PC-9 (cell line): ENCODE measurements at regions of chr4 and their contacts with region 1.

Region 1: GRCh38 chr4:46270986-46271596 is 118.8 kb downstream of the GABRA2 start:
- DNase-seq: no peak
- H3K4me3 ChIP-seq: no peak overlapping the region
- H3K27ac ChIP-seq: no peak overlapping the region
- H3K4me1 ChIP-seq: no peaks in the 10 kb centered on the region
- H3K27me3 ChIP-seq: no peaks in the 10 kb centered on the region
- CTCF ChIP-seq: peak; percentile 65

Region 2: DNA sequence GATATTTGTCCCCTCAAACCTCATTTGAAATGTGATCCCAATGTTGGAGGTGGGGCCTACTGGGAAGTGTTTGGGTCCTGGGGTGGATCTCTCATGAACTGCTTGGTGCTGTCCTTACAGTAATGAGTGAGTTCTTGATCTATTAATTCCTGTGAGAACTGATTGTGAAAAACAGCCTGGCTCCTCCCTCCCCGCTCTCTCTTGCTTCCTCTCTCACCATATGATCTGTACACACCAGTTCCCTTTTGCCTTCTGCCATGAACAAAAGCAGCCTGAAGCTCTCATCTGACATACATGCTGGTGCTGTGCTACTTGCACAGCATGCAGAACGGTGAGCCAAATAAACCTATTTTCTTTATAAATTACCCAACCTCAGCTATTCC is 1608.5 kb before region 1 on chr4:
- CTCF ChIA-PET with region 1: no interaction called
- POLR2A ChIA-PET with region 1: no interaction called
- intact Hi-C with region 1: loop called (anchors 10 kb)
- DNase-seq: no peak
- H3K4me3 ChIP-seq: no peak overlapping the region
- H3K27ac ChIP-seq: no peak overlapping the region
- H3K4me1 ChIP-seq: no peaks in the 10 kb centered on the region
- H3K27me3 ChIP-seq: no peaks in the 10 kb centered on the region
- CTCF ChIP-seq: no peak

Region 3: DNA sequence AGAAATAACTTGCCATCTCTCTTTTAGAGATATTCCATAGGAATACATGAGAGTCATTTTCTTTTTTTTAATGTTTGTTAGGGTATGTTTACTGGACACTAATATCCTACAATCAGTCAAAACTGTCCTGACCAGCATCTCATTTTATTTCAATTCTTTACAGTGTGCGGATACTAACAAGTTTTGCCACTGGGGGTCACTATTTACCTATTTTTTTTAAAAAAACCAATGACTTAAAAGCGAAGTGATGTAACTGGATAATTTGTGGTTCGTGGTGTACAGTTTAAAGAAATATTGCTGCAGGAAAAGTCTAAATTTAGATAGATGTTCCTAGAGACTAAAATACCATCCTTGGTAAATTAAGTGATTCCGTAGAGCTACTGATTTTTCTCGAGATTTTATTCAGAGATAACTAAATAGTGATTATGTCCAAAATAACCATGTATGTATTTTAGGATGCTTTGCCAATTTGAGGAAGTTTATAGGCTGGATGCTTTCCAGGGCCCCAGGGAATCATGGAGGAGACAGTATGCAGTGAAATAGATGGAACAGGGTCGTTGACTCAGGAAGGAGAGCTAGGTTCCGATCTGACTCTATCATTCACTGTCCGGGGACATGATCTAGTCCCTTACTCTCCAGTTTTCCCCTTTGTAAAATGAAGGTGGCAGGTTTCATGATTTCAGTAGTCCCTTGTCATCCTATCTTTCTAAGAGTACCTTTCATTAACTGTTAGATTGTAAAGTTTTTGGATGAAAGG is 1510.8 kb before region 1 on chr4:
- CTCF ChIA-PET with region 1: no interaction called
- POLR2A ChIA-PET with region 1: no interaction called
- intact Hi-C with region 1: loop called (anchors 2 kb)
- DNase-seq: no peak
- H3K4me3 ChIP-seq: no peak overlapping the region
- H3K27ac ChIP-seq: no peak overlapping the region
- H3K4me1 ChIP-seq: no peaks in the 10 kb centered on the region
- H3K27me3 ChIP-seq: no peaks in the 10 kb centered on the region
- CTCF ChIP-seq: peak; percentile 70

Region 4: GRCh38 chr4:44927399-44928380 is 1343.4 kb before region 1 on chr4:
- CTCF ChIA-PET with region 1: no interaction called
- POLR2A ChIA-PET with region 1: no interaction called
- intact Hi-C with region 1: loop called (anchors 2 kb)
- DNase-seq: no peak
- H3K4me3 ChIP-seq: no peak overlapping the region
- H3K27ac ChIP-seq: no peak overlapping the region
- H3K4me1 ChIP-seq: no peaks in the 10 kb centered on the region
- H3K27me3 ChIP-seq: no peaks in the 10 kb centered on the region
- CTCF ChIP-seq: peak; percentile 68

Region 5: GRCh38 chr4:45453258-45453853 is 817.7 kb before region 1 on chr4:
- CTCF ChIA-PET with region 1: no interaction called
- POLR2A ChIA-PET with region 1: no interaction called
- intact Hi-C with region 1: loop called (anchors 5 kb)
- DNase-seq: peak in 1 of 2 experiments; percentile 33
- H3K4me3 ChIP-seq: no peak overlapping the region
- H3K27ac ChIP-seq: no peak overlapping the region
- H3K4me1 ChIP-seq: no peaks in the 10 kb centered on the region
- H3K27me3 ChIP-seq: no peaks in the 10 kb centered on the region
- CTCF ChIP-seq: peak; percentile 57

Region 6: DNA sequence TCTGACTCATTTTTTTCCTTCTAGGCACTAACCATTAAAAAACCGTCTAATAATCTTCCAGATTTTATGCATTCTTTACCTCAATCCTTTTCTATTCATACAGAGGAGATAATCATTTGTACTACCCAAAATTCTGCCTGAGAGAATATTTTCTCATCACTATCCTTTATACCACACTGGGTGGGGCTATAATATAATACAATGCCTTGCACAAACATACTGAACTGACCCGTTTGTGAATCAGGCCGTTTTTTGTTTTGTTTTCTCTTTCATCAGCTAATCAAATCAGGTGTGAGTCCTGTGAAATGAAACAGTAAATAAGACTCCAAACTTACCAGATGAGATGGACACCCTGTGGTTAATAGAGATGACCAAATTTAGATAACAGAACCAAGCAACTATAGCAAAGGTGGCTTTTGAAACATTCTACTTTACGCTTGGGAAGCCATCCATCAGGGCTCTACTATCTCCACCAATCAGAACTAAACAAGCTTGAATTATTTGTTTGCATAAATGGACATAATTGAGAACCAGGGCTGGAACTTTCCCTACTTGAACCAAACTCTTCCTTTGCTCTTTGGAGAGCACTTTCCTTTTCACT is 720.2 kb before region 1 on chr4:
- CTCF ChIA-PET with region 1: no interaction called
- POLR2A ChIA-PET with region 1: no interaction called
- intact Hi-C with region 1: loop called (anchors 10 kb)
- DNase-seq: no peak
- H3K4me3 ChIP-seq: no peak overlapping the region
- H3K27ac ChIP-seq: no peak overlapping the region
- H3K4me1 ChIP-seq: no peaks in the 10 kb centered on the region
- H3K27me3 ChIP-seq: no peaks in the 10 kb centered on the region
- CTCF ChIP-seq: no peak

Region 7: GRCh38 chr4:45944000-45944399 is 327.1 kb before region 1 on chr4:
- CTCF ChIA-PET with region 1: no interaction called
- POLR2A ChIA-PET with region 1: no interaction called
- intact Hi-C with region 1: no loop called
- DNase-seq: no peak
- H3K4me3 ChIP-seq: no peak overlapping the region
- H3K27ac ChIP-seq: no peak overlapping the region
- H3K4me1 ChIP-seq: no peaks in the 10 kb centered on the region
- H3K27me3 ChIP-seq: no peaks in the 10 kb centered on the region
- CTCF ChIP-seq: no peak; the same call in 1 of the 2 replicates